ENCODE measurements at regions of chr15 and their contacts with region 1.

Region 1: DNA sequence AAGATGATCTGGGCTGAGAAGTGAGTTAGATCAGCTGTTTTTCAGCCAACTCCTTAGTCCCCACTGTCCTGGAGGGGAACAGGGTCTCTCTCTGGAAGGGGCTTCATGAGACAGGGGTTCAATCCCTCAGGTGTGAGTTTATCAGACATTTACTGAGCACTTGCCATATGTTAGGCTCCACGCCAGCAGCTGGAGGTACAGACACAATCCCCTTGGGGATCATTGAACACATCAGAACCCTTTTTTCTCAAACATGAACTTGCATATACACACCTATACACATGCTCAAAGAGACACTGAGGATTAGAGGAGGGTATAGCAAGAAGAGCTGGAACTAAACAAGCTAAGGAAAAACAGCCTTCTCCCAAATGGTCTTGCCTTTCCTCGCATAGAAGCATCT is 5.5 kb upstream of the BMF start:
- DNase-seq: no peak
- H3K4me3 ChIP-seq: no peak overlapping the region
- H3K27ac ChIP-seq: no peak overlapping the region
- H3K4me1 ChIP-seq: no peaks in the 10 kb centered on the region
- H3K27me3 ChIP-seq: no peaks in the 10 kb centered on the region
- CTCF ChIP-seq: no peak
- POLR2A ChIP-seq: no peak

Region 2: DNA sequence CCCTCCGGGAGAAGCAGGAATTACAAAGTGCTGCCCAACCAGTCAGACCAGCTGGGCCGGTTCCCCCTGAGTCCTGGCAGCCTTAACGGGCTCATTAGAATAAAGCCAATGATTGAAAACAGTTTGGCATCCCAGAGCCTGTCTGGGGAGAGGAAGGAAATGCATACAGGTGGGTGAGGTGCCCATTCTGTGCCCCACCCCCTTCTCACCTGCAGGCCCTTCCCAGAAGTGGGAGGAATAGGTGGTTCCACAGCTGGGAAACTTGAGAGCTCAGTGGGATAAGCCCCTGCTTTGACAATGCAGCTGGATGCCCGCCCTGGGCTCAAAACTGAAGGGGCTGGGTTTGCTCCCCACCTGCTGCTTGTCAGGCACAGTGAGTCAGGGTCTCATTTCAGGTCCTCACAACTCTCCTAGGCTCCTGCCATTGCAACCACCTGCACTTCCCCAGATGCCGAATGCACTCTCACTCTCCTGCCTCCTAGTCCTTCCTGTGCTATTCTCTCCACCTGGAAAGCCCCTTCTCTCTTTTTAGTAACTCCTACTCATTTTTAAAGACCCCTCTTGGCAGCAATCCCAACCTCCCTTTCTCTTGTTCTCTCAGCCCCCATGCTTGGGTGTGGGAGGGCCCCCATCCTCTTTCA is 41.2 kb after region 1 on chr15:
- intact Hi-C with region 1: loop called (anchors 5 kb)
- DNase-seq: peak; percentile 59
- H3K4me3 ChIP-seq: no peak overlapping the region
- H3K27ac ChIP-seq: no peak overlapping the region
- H3K4me1 ChIP-seq: peaks cover 2% of the 10 kb centered on the region
- H3K27me3 ChIP-seq: no peaks in the 10 kb centered on the region
- CTCF ChIP-seq: peak in 1 of 4 experiments; percentile 7
- POLR2A ChIP-seq: no peak

Region 3: GRCh38 chr15:40249482-40250303 is 135.5 kb after region 1 on chr15:
- intact Hi-C with region 1: no loop called
- DNase-seq: peak; percentile 74
- H3K4me3 ChIP-seq: no peak overlapping the region
- H3K27ac ChIP-seq: peak overlapping the region; percentile 3 to 31
- H3K4me1 ChIP-seq: peaks cover 10% of the 10 kb centered on the region
- H3K27me3 ChIP-seq: no peaks in the 10 kb centered on the region
- CTCF ChIP-seq: no peak
- POLR2A ChIP-seq: no peak